Activated T-helper 1 cell treated with anti-CD3 and anti-CD28 coated beads, Interleukin-12 subunit alpha, Interleukin-12 subunit beta, Interleukin-2, Interleukin-4 antibody, amounts not matched to agents 30 ng/mL and 10 ng/mL and 1 ng/mL, durations not matched to agents 14 hours and 24 hours and 36 hours (primary cell): ENCODE measurements at regions of chr11 and their contacts with region 1.

Region 1: DNA sequence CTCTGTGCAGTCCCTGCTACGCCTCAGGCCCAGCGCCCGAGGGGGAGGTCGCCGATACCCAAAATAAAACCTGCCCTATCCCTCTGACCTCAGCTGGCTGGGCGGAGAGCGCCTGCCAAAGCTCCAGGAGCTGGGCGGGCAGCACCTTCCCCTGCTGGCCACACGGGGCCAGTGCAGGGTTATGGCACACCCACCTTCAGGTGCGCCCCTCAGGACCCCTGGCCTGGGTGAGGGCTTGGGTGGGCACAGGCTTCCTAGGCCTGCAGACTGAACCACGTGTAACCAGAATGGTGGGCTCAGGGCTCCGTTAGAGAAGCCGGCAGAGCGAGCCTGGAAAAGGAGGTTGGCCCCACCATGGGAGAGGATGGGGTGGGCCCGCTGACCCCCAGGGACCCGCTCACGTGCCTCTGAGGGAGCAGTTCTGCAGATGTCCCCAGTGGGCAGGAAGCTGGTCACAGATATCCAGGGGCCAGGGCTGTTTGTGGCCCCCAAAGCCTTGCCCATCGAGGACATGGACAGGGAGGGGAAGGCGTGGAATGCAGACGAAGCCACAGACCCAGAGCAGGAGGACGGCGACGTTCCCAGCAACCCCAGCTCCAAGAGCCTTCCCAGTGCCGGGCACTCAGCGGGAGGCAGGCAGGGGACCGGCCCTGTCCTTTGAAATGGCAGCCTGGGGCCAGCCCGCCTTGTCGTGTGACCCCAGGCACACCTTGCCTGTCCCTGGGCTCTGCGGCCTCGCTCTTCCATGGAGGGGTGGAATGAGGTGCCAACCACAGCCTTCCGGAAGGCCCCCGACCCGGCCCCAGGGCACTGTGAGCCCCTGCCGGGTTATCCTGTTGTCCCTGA is 1.6 kb upstream of the TNNT3 start:
- DNase-seq: no peak
- H3K4me3 Mint-ChIP-seq: no peak overlapping the region
- H3K27ac Mint-ChIP-seq: no peak overlapping the region
- H3K4me1 Mint-ChIP-seq: peaks cover 3% of the 10 kb centered on the region
- H3K27me3 Mint-ChIP-seq: no peaks in the 10 kb centered on the region

Region 2: DNA sequence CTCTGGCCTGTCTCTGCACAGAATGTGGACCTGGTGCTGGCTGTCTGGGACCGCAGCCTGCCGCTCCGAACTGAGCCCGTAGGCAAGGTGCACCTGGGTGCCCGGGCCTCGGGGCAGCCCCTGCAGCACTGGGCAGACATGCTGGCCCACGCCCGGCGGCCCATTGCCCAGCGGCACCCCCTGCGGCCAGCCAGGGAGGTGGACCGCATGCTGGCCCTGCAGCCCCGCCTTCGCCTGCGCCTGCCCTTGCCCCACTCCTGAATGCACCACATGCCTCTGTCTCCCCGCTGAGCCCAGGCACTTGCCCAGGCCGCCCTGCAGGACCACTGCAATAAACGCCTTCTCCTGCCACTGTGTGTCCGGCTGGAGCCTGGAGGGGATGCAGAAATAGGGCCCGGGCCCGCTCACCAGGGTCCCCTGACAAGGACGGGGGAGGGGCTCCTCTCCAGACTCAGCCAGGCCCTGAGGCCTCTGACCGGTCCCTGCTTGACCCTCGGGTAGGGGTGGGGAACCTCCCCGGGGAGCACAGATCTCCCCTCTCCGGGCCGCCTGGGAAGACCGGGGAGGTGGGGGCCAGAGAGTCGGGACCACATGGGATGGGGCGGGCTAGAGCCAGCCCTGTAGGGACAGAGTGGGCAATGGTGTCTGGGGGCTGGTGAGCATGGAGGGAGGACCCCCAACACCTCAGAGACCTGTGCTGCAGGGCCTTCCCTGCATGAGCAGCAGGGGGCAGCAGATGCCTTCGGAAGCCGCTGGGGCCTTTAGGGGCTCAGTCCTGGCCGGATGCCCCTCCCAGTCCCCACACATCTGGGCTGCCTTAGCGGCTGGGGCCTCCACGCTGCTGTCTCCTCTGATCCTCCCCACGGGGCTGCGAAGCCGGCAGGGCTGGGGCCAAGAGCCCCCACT is 80.5 kb before region 1 on chr11:
- intact Hi-C with region 1: loop called (anchors 1 kb)
- DNase-seq: peak; percentile 61
- H3K4me3 Mint-ChIP-seq: no peak overlapping the region
- H3K27ac Mint-ChIP-seq: no peak overlapping the region
- H3K4me1 Mint-ChIP-seq: no peaks in the 10 kb centered on the region
- H3K27me3 Mint-ChIP-seq: peaks cover 2% of the 10 kb centered on the region

Region 3: DNA sequence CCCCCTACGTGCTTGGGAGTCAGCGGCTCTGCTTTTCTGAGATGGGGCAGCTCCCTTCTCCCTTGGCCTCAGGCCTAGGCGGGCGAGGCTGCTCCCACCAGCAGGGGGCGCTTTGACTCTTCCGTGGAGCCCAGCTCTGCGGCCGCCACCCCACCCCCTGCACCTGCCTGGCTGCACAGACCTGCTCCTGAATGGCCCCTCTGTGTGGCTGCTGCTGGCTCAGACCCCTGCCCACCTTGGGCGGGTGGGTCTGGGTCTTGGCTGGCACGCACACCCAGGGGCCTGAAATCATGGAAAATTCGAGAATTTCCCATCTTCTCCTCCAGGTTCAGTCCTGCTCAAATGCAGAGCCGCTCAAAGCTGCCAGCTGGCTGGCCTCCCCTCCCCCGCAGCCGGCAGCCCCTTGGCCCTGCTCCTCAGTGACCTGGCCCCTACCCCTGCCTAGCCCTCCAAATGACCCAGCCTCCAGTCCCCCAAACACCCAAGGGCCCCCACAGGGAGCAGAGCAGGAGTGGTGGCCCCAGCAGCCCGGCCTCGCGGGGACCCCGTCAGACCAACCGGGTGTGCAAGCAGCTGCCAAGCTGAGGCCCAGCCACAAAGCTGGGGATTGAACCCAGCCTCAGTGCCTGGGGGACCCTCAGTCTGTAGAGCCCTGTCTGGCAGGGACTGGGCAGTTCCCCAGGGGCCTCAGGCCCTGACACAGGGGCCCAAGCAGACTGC is 35.2 kb before region 1 on chr11:
- intact Hi-C with region 1: loop called (anchors 5 kb)
- DNase-seq: peak; percentile 60
- H3K4me3 Mint-ChIP-seq: no peak overlapping the region
- H3K27ac Mint-ChIP-seq: no peak overlapping the region
- H3K4me1 Mint-ChIP-seq: no peaks in the 10 kb centered on the region
- H3K27me3 Mint-ChIP-seq: no peaks in the 10 kb centered on the region